Aorta (tissue), 5 donors: ENCODE measurements at regions of chr11 and their contacts with region 1.

Region 1: DNA sequence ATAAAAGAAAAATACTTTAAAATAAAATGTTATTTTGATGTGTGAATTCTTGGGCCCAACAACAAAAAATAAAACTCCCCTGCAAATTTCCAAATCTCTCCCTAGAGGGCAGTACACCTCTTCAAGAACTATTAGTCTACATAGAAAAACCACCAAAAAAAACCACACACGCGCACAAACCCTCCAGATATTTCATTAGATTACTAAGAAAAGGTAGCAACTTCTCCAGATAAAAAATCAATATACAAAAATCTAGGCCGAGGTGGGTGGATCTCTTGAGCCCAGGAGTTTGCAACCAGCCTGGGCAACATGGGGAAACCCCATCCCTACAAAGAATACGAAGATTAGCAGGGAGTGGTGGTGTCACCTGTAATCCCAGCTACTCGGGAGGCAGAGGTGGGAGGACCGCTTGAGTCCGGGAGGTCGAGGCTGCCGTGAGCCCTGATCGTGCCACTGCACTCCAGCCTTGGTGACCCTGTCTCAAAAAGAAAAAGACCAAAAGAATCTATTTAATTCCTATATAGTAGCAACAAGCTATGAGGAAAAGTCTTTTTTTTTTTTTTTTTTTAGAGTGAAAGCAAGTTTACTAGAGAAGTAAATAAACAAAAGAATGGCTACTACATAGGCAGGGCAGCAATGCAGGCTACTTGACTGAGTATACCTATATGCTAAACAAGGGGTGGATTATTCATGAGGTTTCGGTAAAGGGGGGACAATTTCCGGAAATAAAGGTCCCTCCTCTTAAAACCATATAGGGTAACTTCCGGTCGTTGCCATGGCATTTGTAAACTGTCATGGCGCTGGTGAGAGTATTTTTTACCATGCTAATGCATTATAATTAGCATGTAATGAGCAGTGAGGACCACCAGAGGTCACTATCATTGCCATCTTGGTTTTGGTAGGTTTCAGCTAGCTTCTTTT is 13.1 kb downstream of the B3GNT6 start:
- DNase-seq: peak in 1 of 2 donors; percentile 78
- ATAC-seq: peak; percentile 89
- H3K4me3 ChIP-seq: peak overlapping the region; percentile 34 to 54
- H3K27ac ChIP-seq: no peak overlapping the region
- H3K4me1 ChIP-seq: no peaks in the 10 kb centered on the region
- H3K27me3 ChIP-seq: no peaks in the 10 kb centered on the region

Region 2: DNA sequence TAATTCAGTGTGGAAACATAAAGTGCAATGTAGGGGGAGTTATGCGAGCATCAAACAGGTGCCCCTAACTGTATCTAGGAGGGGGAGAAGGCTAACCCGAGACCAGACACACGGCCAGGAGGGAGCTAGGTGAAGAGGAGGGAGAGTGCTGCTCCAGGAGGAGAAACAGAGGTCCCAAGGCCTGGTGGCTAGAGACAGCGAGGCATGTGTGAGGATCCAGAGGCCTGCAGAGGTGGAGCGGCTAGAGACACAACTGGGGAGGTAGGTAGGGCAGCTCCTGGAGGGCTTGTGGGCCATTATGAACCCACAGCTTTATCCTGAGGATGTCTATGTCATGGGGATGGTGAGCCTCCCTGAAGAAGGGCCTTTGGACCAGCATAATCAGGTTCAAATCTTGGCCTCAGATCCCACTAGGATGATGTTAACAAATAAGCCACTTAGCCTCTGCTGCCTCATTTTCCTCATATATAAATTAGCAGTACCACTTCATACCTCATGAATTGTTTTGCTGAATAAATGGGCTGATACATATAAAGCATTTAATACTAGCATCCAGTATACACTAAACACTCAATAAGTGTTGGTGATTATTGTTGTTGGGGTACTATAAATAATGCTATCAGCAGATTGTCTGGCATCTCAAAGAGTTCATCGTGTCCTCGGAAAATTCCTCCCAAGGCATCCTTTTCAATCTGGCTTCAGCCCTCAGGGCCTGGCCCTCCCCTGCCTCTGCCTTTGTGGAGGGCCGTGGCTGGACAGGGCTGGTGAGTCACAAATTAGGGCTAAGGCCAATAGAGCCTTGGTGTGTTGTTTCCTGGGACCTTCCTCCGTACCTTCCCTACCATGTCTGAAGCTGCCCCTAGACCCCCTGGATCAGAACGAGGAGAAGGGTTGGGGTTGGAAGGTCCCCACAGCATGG is 345.9 kb before region 1 on chr11:
- intact Hi-C with region 1: no loop called
- DNase-seq: no peak
- ATAC-seq: no peak
- H3K4me3 ChIP-seq: no peak overlapping the region
- H3K27ac ChIP-seq: no peak overlapping the region
- H3K4me1 ChIP-seq: no peaks in the 10 kb centered on the region
- H3K27me3 ChIP-seq: no peaks in the 10 kb centered on the region

Region 3: GRCh38 chr11:77073328-77074001 is 26.2 kb after region 1 on chr11:
- intact Hi-C with region 1: loop called in 1 of 2 experiments (anchors 2 kb)
- DNase-seq: peak; percentile 92
- ATAC-seq: peak; percentile 94
- H3K4me3 ChIP-seq: no peak overlapping the region
- H3K27ac ChIP-seq: peak overlapping the region; percentile 23 to 90
- H3K4me1 ChIP-seq: no peaks in the 10 kb centered on the region
- H3K27me3 ChIP-seq: no peaks in the 10 kb centered on the region

Region 4: GRCh38 chr11:77091146-77091940 is 44.1 kb after region 1 on chr11:
- intact Hi-C with region 1: loop called (anchors 1 to 2 kb)
- DNase-seq: peak; percentile 82 to 94
- ATAC-seq: peak; percentile 80
- H3K4me3 ChIP-seq: no peak overlapping the region
- H3K27ac ChIP-seq: no peak overlapping the region
- H3K4me1 ChIP-seq: no peaks in the 10 kb centered on the region
- H3K27me3 ChIP-seq: no peaks in the 10 kb centered on the region